Activated B cell treated with CpG ODN at 0.5 μM for 24 hours (primary cell): ENCODE measurements at regions of chr11 and their contacts with region 1.

Region 1: GRCh38 chr11:86041975-86042378 is 26.9 kb downstream of the PICALM start:
- DNase-seq: no peak
- ATAC-seq: peak; percentile 91
- H3K4me3 Mint-ChIP-seq: peak overlapping the region; percentile 6
- H3K27ac Mint-ChIP-seq: peak overlapping the region; percentile 19
- H3K4me1 Mint-ChIP-seq: peaks cover 71% of the 10 kb centered on the region
- H3K27me3 Mint-ChIP-seq: no peaks in the 10 kb centered on the region
- CTCF ChIP-seq: no peak

Region 2: GRCh38 chr11:85595285-85595884 is 446.6 kb before region 1 on chr11:
- CTCF ChIA-PET with region 1: no interaction called
- POLR2A ChIA-PET with region 1: no interaction called
- intact Hi-C with region 1: no loop called
- DNase-seq: no peak
- ATAC-seq: no peak
- H3K4me3 Mint-ChIP-seq: no peak overlapping the region
- H3K27ac Mint-ChIP-seq: no peak overlapping the region
- H3K4me1 Mint-ChIP-seq: no peaks in the 10 kb centered on the region
- H3K27me3 Mint-ChIP-seq: no peaks in the 10 kb centered on the region
- CTCF ChIP-seq: peak; percentile 35

Region 3: GRCh38 chr11:86003654-86004053 is 38.3 kb before region 1 on chr11:
- CTCF ChIA-PET with region 1: no interaction called
- POLR2A ChIA-PET with region 1: no interaction called
- intact Hi-C with region 1: no loop called
- DNase-seq: no peak
- ATAC-seq: no peak
- H3K4me3 Mint-ChIP-seq: no peak overlapping the region
- H3K27ac Mint-ChIP-seq: no peak overlapping the region
- H3K4me1 Mint-ChIP-seq: no peaks in the 10 kb centered on the region
- H3K27me3 Mint-ChIP-seq: no peaks in the 10 kb centered on the region
- CTCF ChIP-seq: no peak

Region 4: GRCh38 chr11:86021377-86021776 is 20.6 kb before region 1 on chr11:
- CTCF ChIA-PET with region 1: interaction called, 3 read pairs
- POLR2A ChIA-PET with region 1: no interaction called
- intact Hi-C with region 1: loop called (anchors 2 kb)
- DNase-seq: no peak
- ATAC-seq: peak; percentile 47
- H3K4me3 Mint-ChIP-seq: no peak overlapping the region
- H3K27ac Mint-ChIP-seq: peak overlapping the region; percentile 37
- H3K4me1 Mint-ChIP-seq: peaks cover 17% of the 10 kb centered on the region
- H3K27me3 Mint-ChIP-seq: no peaks in the 10 kb centered on the region
- CTCF ChIP-seq: no peak

Region 5: GRCh38 chr11:86062719-86063118 is 20.7 kb after region 1 on chr11:
- CTCF ChIA-PET with region 1: interaction called, 28 read pairs
- POLR2A ChIA-PET with region 1: interaction called, 22 read pairs
- intact Hi-C with region 1: loop called (anchors 1 kb)
- DNase-seq: no peak
- ATAC-seq: no peak
- H3K4me3 Mint-ChIP-seq: peak overlapping the region; percentile 60
- H3K27ac Mint-ChIP-seq: no peak overlapping the region
- H3K4me1 Mint-ChIP-seq: peaks cover 95% of the 10 kb centered on the region
- H3K27me3 Mint-ChIP-seq: no peaks in the 10 kb centered on the region
- CTCF ChIP-seq: no peak

Region 6: GRCh38 chr11:86193297-86194095 is 151.5 kb after region 1 on chr11:
- CTCF ChIA-PET with region 1: interaction called, 87 read pairs
- POLR2A ChIA-PET with region 1: interaction called, 6 read pairs
- intact Hi-C with region 1: loop called (anchors 1 kb)
- DNase-seq: peak; percentile 48
- ATAC-seq: peak; percentile 96
- H3K4me3 Mint-ChIP-seq: peak overlapping the region; percentile 76
- H3K27ac Mint-ChIP-seq: peak overlapping the region; percentile 92
- H3K4me1 Mint-ChIP-seq: peaks cover 30% of the 10 kb centered on the region
- H3K27me3 Mint-ChIP-seq: no peaks in the 10 kb centered on the region
- CTCF ChIP-seq: peak; percentile 50

Region 7: DNA sequence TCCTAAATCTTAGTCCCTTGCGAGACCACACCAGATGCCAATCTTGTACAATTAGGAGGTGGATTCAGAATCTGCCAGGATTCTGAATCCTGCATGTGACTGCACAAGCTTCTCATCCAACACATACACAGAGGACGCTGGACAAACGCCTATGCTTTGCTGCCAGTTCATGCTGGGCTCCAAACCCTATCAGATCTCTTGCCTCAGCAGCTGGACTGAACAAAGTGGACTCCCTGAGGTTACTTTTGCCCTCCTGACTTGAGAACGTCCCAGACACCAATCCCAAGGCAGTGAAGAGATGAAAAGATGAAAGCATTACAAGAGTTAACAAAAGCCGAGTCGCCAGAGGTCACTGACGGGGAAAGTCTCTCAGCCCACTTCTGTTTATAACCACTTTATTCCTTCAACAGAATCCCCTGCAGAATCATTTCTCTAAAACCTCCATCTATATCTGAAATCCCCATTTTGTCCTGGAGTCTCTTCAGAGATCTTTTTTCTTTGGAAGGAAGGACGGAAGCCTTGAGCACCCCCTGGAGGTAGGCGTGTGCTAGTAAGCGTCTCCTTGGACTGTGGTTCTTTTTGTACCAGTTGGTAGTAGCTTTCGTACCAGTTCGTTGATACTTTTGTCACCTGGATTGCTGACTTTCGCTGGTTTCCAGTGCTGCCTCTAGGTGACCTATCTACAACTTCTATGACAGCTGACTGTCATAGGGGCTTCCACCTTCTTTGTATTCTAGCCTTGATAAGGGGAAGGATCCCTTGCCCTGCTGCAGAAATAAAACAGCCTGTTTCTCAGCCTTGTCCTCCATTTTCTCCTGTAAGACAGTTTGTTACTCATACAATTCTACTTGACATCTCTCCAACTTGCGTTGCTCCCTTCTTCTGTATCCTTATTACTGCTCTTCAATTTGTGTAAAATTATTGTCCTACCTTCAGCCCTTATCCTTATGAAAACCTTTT is 176.4 kb after region 1 on chr11:
- CTCF ChIA-PET with region 1: interaction called, 50 read pairs
- POLR2A ChIA-PET with region 1: interaction called, 4 read pairs
- intact Hi-C with region 1: loop called (anchors 1 kb)
- DNase-seq: no peak
- ATAC-seq: peak; percentile 22
- H3K4me3 Mint-ChIP-seq: peak overlapping the region; percentile 69
- H3K27ac Mint-ChIP-seq: peak overlapping the region; percentile 94
- H3K4me1 Mint-ChIP-seq: peaks cover 48% of the 10 kb centered on the region
- H3K27me3 Mint-ChIP-seq: no peaks in the 10 kb centered on the region
- CTCF ChIP-seq: peak; percentile 32

Region 8: DNA sequence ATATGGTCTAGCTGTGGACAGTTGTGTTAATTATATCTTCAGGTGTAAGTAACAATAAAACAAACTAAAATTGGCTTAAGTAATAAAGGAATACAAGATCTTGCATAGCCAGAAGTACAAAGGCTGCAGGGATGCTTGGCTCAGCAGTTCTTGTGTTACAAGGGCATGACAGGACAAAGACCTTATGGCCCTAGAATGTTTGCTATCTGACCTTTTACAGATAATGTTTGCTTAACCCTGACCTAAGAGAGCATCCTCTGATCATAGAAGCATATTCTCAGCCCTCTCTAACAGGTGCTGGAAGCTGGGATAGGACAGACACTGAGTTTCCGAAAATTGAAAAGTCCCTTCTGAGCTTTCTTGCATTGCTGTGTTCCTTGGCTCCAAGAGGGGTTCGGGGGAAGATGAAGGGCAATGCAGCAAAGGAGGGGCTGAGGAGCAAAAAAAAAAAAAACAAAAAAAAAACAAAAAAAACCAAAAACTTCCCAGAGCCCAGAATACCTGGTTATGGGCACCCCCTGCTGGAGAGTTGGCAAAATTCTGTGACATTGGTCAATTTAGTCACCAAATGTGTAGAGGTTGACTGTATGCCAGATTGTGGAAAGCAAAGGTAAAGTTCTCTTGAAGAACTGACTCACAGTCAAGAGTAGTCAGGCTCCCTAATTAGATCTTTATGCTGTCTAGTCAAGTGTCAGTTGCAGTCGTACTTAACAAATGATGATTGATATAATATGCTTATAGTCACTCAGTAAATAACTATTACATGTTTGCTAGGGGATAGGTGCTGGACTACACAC is 249.7 kb after region 1 on chr11:
- CTCF ChIA-PET with region 1: interaction called, 25 read pairs
- POLR2A ChIA-PET with region 1: interaction called, 8 read pairs
- intact Hi-C with region 1: loop called (anchors 1 kb)
- DNase-seq: no peak
- ATAC-seq: peak; percentile 44
- H3K4me3 Mint-ChIP-seq: no peak overlapping the region
- H3K27ac Mint-ChIP-seq: no peak overlapping the region
- H3K4me1 Mint-ChIP-seq: peaks cover 35% of the 10 kb centered on the region
- H3K27me3 Mint-ChIP-seq: no peaks in the 10 kb centered on the region
- CTCF ChIP-seq: peak; percentile 34

Region 9: DNA sequence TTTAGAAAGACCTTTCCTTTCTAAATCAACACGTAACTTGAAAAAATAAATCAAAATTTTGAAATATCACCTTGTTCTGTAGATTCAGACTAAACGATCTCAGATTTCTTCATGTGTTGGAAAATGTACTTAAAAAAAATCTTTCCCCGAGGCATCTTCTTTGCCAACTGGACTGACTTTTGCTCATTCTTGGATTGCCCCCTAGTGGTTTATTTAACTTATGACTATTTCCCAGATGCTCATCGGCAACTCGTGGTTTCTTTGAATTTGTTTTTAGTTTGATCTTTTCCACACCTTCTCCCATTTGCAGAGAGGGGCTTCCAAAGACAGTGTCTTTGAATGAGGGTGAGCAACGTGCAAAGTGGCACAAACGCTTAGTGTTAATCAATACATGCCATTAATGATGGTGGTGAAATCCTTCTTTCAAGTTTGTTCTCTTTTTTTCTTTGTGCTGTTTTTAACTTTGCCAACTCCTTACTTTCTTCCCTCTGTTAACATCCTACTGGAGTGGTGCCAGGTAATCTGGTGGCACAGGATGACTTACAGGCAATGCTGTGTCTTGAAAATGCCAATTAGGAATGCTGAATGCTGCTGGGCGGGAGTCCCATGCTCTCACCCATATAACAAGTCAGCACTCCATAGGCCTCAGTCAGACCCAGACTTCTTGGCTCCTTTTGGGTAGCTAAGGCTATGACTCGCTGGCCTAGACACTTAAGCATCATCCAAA is 776.7 kb after region 1 on chr11:
- CTCF ChIA-PET with region 1: no interaction called
- POLR2A ChIA-PET with region 1: no interaction called
- intact Hi-C with region 1: no loop called
- DNase-seq: no peak
- ATAC-seq: no peak
- H3K4me3 Mint-ChIP-seq: no peak overlapping the region
- H3K27ac Mint-ChIP-seq: no peak overlapping the region
- H3K4me1 Mint-ChIP-seq: no peaks in the 10 kb centered on the region
- H3K27me3 Mint-ChIP-seq: peaks cover 12% of the 10 kb centered on the region
- CTCF ChIP-seq: no peak